Uterus (tissue), 4 donors: ENCODE measurements at regions of chr9 and their contacts with region 1.

Region 1: GRCh38 chr9:29548436-29548835 is 1975.2 kb upstream of the C9orf72 start:
- DNase-seq: peak; percentile 32 to 60
- H3K4me3 ChIP-seq: no peak overlapping the region
- H3K27ac ChIP-seq: peak overlapping the region; percentile 73 to 83
- H3K4me1 ChIP-seq: no peaks in the 10 kb centered on the region
- H3K27me3 ChIP-seq: no peaks in the 10 kb centered on the region
- CTCF ChIP-seq: no peak
- POLR2A ChIP-seq: no peak

Region 2: DNA sequence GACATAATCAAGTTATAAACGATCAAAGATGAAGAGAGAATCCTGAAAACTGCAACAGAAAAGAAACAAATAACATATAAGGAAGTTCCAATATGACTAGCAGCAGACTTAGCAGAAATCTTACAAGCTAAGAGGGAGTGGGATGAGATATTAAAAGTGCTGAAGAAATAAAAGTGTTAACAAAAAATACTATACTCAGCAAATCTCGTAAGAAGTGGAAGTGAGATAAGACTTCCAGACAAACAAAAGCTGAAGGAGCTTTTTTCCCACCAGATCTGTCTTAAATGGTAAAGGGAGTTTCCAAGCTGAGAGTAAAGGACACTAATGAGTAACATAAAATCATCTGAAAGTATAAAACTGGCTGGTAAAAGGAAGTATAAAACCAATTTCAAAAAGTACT is 60.8 kb after region 1 on chr9:
- intact Hi-C with region 1: loop called (anchors 10 kb)
- DNase-seq: no peak
- H3K4me3 ChIP-seq: no peak overlapping the region
- H3K27ac ChIP-seq: no peak overlapping the region
- H3K4me1 ChIP-seq: no peaks in the 10 kb centered on the region
- H3K27me3 ChIP-seq: no peaks in the 10 kb centered on the region
- CTCF ChIP-seq: no peak
- POLR2A ChIP-seq: no peak

Region 3: GRCh38 chr9:29648601-29649000 is 100.2 kb after region 1 on chr9:
- intact Hi-C with region 1: no loop called
- DNase-seq: no peak
- H3K4me3 ChIP-seq: no peak overlapping the region
- H3K27ac ChIP-seq: no peak overlapping the region
- H3K4me1 ChIP-seq: no peaks in the 10 kb centered on the region
- H3K27me3 ChIP-seq: no peaks in the 10 kb centered on the region
- CTCF ChIP-seq: no peak
- POLR2A ChIP-seq: no peak